Activated CD8-positive, alpha-beta memory T cell treated with anti-CD3 and anti-CD28 coated beads, Interleukin-2, amount 10 ng/mL, durations not matched to agents 7 days and 5 days (primary cell): ENCODE measurements at regions of chr2 and their contacts with region 1.

Region 1: DNA sequence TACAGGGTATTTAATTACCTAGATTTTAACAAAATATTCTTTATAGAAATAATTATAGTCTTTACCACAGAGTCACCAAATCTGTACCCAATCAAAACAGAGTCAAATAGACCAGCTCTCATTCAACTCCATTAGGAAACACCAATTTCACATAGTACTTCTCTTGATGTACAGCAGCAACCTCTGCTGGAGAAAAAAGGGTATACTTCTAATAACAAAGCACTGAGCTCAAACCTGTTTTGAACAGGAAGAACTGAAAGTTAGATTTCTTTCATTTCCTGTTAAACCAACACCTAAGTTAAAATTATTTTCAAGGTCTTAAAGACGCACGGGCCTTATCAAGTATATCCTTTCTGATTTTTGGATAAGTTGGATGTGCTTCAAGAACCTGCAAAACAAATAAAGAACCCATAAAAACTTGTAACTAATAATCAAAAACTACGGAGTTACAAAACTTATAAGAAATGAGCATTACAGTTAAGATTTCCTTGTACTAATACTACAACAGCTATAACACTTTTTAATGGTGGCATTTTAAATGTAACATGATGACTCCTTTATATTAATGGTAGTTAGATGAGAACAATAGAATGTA is 79.0 kb downstream of the TTC21B start:
- DNase-seq: no peak
- ATAC-seq: peak; percentile 86
- H3K4me3 Mint-ChIP-seq: no peak overlapping the region
- H3K27ac Mint-ChIP-seq: peak overlapping the region; percentile 61
- H3K4me1 Mint-ChIP-seq: peaks cover 25% of the 10 kb centered on the region
- H3K27me3 Mint-ChIP-seq: no peaks in the 10 kb centered on the region

Region 2: DNA sequence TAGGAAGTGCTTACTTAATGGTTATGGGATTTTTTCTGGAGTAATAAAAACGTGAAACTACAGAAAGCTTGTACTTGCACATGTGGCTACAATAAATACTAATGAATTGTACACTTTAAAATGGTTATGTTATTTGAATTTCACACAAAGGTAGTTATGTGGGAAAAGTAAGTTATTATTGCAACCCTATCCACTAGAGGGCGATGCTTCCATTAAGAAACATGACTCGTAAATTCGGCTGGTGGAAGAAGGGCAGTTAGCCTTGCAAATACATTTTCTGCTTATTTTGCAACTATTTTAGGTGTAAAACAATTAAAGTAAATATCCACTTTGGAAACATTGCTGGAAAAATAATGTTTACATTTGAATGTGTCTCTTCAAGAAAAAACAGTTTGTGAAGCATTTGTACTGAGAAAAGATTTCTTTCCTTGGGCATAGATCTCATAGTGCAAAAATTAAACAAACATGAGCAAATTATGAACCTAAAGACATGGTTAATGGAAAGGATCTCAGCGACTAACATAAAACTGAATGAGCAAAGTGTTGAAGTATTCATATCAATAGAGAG is 473.2 kb before region 1 on chr2:
- CTCF ChIA-PET with region 1: interaction called, 12 read pairs
- DNase-seq: no peak
- ATAC-seq: no peak
- H3K4me3 Mint-ChIP-seq: no peak overlapping the region
- H3K27ac Mint-ChIP-seq: no peak overlapping the region
- H3K4me1 Mint-ChIP-seq: no peaks in the 10 kb centered on the region
- H3K27me3 Mint-ChIP-seq: peaks cover 38% of the 10 kb centered on the region

Region 3: GRCh38 chr2:165794536-165794928 is 80.0 kb before region 1 on chr2:
- CTCF ChIA-PET with region 1: interaction called, 14 read pairs
- DNase-seq: peak; percentile 90
- ATAC-seq: peak; percentile 92
- H3K4me3 Mint-ChIP-seq: peak overlapping the region; percentile 96
- H3K27ac Mint-ChIP-seq: peak overlapping the region; percentile 98
- H3K4me1 Mint-ChIP-seq: peaks cover 46% of the 10 kb centered on the region
- H3K27me3 Mint-ChIP-seq: peaks cover 11% of the 10 kb centered on the region

Region 4: DNA sequence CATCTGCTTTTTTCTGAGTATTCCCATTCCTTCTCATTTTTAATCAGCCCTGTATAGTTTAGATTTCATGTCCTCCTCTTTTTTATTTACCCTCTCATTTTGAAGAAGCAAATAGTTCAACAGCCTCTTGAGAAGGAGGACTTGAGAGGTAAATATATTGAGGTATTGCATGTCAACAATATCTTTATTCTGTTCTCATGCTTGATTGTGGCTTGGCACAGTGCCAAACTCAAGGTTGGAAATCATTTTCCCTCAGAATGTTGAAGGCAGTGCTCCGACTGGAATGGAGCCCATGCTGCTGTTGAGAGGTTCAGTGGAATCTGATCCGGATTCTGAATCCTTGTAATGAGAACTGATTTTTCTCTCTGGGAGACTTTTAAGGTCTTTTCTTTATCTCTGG is 49.5 kb before region 1 on chr2:
- CTCF ChIA-PET with region 1: no interaction called
- DNase-seq: no peak
- ATAC-seq: no peak
- H3K4me3 Mint-ChIP-seq: no peak overlapping the region
- H3K27ac Mint-ChIP-seq: no peak overlapping the region
- H3K4me1 Mint-ChIP-seq: no peaks in the 10 kb centered on the region
- H3K27me3 Mint-ChIP-seq: peaks cover 33% of the 10 kb centered on the region

Region 5: GRCh38 chr2:165969227-165969626 is 94.7 kb after region 1 on chr2:
- CTCF ChIA-PET with region 1: no interaction called
- DNase-seq: no peak
- ATAC-seq: no peak
- H3K4me3 Mint-ChIP-seq: no peak overlapping the region
- H3K27ac Mint-ChIP-seq: no peak overlapping the region
- H3K4me1 Mint-ChIP-seq: no peaks in the 10 kb centered on the region
- H3K27me3 Mint-ChIP-seq: peaks cover 3% of the 10 kb centered on the region